Ascending aorta (tissue), 2 donors: ENCODE measurements at regions of chr1 and their contacts with region 1.

Region 1: GRCh38 chr1:119647734-119648619 is at the start of gene ZNF697:
- DNase-seq: peak; percentile 86 to 98
- H3K4me3 ChIP-seq: peak within 1 kb of the TSS; percentile 90 to 96
- H3K27ac ChIP-seq: peak within 1 kb of the TSS; percentile 87 to 95
- H3K4me1 ChIP-seq: peaks cover 0 to 4% of the 10 kb centered on the region in 2 donors
- H3K27me3 ChIP-seq: no peaks in the 10 kb centered on the region
- CTCF ChIP-seq: peak in 2 of 3 experiments; percentile 7 to 48
- total RNA-seq, gene ZNF697: 0.11 TPM

Region 2: DNA sequence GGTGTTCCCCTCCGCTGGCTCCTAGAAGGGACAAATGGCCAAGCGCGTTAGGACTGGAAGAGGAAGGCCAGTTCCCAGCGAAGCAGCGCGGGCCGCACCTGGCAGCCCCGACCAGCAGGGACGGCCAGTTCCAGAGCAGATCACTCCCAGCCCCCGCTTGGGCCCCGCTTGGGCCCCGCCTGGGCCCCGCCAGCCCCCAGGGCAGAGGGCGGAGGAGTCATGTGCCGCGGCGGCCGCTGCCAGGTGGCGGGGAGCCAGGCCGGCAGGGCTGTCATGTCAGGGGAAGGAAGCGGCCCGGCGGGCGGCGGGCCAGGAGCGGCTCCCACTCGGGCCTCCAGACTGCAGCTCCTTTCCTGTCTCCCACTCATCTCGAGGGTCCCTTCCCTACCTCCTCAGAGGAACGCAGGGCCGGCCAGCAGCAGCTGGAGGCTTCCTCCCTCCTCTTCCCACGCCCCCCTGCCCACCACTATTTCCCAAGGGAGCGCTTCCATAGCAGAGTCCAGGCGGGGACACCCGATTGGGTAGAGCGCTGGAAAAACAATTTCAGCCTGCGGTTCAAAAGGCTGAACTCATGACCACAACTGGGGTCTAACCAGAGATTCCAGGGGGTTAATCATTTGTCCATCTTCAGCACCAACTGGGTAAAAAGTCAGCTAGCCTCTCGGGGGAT is 16.4 kb before region 1 on chr1:
- intact Hi-C with region 1: loop called (anchors 1 kb)
- DNase-seq: peak; percentile 28 to 88
- H3K4me3 ChIP-seq: peak overlapping the region; percentile 50 to 65
- H3K27ac ChIP-seq: peak overlapping the region; percentile 63 to 84
- H3K4me1 ChIP-seq: peaks cover 14 to 20% of the 10 kb centered on the region in 2 donors
- H3K27me3 ChIP-seq: no peaks in the 10 kb centered on the region
- CTCF ChIP-seq: no peak

Region 3: DNA sequence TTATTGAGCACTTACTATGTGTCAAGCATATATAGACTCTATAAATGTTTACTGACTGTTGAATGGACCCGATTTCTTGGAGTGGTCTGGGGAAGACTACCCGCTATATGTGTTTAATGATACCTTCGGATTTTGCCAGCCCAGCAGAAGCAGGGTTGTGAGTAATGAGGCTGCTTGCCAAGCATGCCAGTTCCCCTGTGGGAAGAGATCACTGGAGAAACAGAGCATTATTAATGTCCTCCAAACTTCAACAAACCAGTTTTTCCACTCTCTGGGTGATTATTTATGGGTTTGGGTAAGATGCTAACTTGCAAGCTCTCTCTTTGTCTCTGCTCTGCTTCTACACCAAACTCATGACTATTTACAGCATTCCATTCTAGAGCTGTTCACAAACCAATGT is 38.7 kb after region 1 on chr1:
- intact Hi-C with region 1: no loop called
- DNase-seq: no peak
- H3K4me3 ChIP-seq: no peak overlapping the region
- H3K27ac ChIP-seq: no peak overlapping the region
- H3K4me1 ChIP-seq: no peaks in the 10 kb centered on the region
- H3K27me3 ChIP-seq: no peaks in the 10 kb centered on the region
- CTCF ChIP-seq: no peak